CD4-positive, alpha-beta memory T cell (primary cell): ENCODE measurements at regions of chr19 and their contacts with region 1.

Region 1: GRCh38 chr19:1812469-1813196 is 557 bp upstream of the ATP8B3 start:
- DNase-seq: peak; percentile 85 to 90 (median 85)
- H3K4me3 ChIP-seq: peak overlapping the region; percentile 73
- H3K4me3 Mint-ChIP-seq: peak overlapping the region; percentile 86 to 99 (median 96)
- H3K27ac ChIP-seq: peak overlapping the region; percentile 42
- H3K27ac Mint-ChIP-seq: peak overlapping the region; percentile 87 to 98 (median 95)
- H3K4me1 ChIP-seq: peaks cover 14% of the 10 kb centered on the region
- H3K4me1 Mint-ChIP-seq: peaks cover 10 to 15% (median 11%) of the 10 kb centered on the region in 4 donors
- H3K27me3 ChIP-seq: no peaks in the 10 kb centered on the region
- H3K27me3 Mint-ChIP-seq: no peaks in the 10 kb centered on the region

Region 2: DNA sequence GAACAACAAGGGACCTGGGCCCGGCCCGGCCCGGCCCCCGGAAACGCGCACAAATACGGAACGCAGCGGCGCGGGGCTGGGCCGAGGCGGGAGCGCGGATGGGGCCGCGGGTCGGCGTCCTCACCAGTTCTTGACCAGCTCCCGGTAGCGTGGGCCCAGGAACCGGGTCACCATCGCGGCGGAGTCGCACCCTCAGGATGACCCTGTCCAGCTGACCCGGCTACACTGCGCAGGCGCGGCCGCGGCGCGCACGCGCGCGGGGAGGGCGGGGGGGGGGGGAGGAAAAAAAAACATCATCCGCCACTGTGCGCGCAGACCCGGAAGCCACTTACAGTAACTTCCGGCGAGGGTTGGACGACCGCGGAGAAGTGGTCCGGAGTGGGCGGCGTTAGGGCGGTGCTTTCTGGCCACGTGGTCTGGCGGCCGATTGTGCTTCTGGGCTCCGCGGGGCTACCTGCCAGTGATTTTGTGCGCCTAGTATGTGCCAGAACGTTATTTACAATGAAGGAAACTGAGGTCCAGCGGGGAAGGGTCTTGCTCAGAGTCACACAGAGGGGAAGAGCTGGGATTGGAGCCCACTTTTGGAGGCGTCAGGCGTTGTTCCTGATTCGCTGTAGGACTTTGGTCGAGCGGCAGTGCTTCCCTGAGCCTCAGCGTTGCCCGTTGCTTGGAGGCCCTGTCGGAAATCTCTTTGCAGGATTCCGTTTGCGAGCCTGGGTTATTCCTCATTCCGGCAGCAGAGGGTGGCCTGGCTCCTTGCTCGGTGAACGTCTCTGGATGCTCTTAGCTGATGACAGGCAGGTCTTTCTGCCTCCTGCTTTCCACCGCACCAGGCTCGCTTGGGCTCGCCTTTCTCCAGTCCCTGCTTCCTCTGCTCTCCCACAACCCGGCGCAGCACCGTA is 207.1 kb before region 1 on chr19 and contains the start of gene UQCR11:
- CTCF ChIA-PET with region 1: no interaction called
- POLR2A ChIA-PET with region 1: no interaction called
- intact Hi-C with region 1: loop called (anchors 2 kb)
- DNase-seq: peak; percentile 87 to 95 (median 91)
- H3K4me3 ChIP-seq: peak within 1 kb of the TSS; percentile 80 to 85
- H3K4me3 Mint-ChIP-seq: peak within 1 kb of the TSS; percentile 94 to 99 (median 96)
- H3K27ac ChIP-seq: peak within 1 kb of the TSS; percentile 94
- H3K27ac Mint-ChIP-seq: peak within 1 kb of the TSS; percentile 98 to 100 (median 99)
- H3K4me1 ChIP-seq: peaks cover 56% of the 10 kb centered on the region
- H3K4me1 Mint-ChIP-seq: peaks cover 20 to 70% (median 47%) of the 10 kb centered on the region in 4 donors
- H3K27me3 ChIP-seq: no peaks in the 10 kb centered on the region
- H3K27me3 Mint-ChIP-seq: no peaks in the 10 kb centered on the region
- total RNA-seq, gene UQCR11: 157 to 158 TPM

Region 3: GRCh38 chr19:1767464-1767933 is 45.1 kb before region 1 on chr19:
- CTCF ChIA-PET with region 1: no interaction called
- POLR2A ChIA-PET with region 1: interaction called, 3 read pairs
- intact Hi-C with region 1: loop called (anchors 5 kb)
- DNase-seq: peak; percentile 40 to 61 (median 47)
- H3K4me3 ChIP-seq: no peak overlapping the region
- H3K4me3 Mint-ChIP-seq: no peak overlapping the region
- H3K27ac ChIP-seq: no peak overlapping the region
- H3K27ac Mint-ChIP-seq: no peak overlapping the region
- H3K4me1 ChIP-seq: peaks cover 4% of the 10 kb centered on the region
- H3K4me1 Mint-ChIP-seq: peaks cover 0 to 2% (median 0%) of the 10 kb centered on the region in 4 donors
- H3K27me3 ChIP-seq: peaks cover 54% of the 10 kb centered on the region
- H3K27me3 Mint-ChIP-seq: peaks cover 41 to 51% of the 10 kb centered on the region in 2 donors

Region 4: DNA sequence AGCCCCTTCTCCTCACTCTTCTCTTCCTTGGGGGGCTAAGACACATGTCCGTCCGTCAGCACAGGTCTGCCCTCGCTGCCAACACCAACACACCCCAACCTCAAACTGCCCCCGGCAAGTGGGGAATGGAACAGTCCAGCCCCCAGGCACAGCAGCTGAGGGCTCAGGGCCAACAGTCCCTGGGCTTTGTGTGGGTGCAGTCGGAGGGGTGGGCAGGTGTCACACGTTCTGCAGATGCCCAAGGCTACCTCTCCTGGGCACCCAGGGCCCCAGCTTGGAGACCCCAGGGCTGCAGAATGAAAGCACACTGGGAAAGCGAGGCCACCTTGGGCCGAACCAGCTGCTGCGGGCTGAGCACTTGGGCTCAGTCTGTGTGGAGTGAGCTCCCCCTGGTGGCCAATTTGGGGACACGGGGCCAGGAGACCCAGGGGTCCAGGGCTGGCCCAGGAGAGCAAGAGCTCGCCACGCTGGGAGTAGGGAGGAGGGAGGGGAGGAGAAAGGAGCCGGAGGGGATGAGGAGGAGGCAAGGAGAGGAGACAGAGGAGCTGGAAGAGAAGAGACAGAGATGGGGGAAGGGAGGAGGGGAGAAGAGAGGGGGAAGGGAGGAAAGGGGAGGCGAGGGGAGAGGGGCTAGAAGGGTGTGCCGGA is 13.4 kb after region 1 on chr19:
- CTCF ChIA-PET with region 1: interaction called, 10 read pairs
- POLR2A ChIA-PET with region 1: interaction called, 5 read pairs
- intact Hi-C with region 1: no loop called
- DNase-seq: peak; percentile 70 to 75 (median 73)
- H3K4me3 ChIP-seq: no peak overlapping the region
- H3K4me3 Mint-ChIP-seq: peak overlapping the region in 2 of 8 donors; percentile 2 to 59
- H3K27ac ChIP-seq: no peak overlapping the region
- H3K27ac Mint-ChIP-seq: peak overlapping the region in 1 of 7 donors; percentile 47
- H3K4me1 ChIP-seq: peaks cover 6% of the 10 kb centered on the region
- H3K4me1 Mint-ChIP-seq: peaks cover 0 to 9% (median 2%) of the 10 kb centered on the region in 4 donors
- H3K27me3 ChIP-seq: no peaks in the 10 kb centered on the region
- H3K27me3 Mint-ChIP-seq: no peaks in the 10 kb centered on the region

Region 5: DNA sequence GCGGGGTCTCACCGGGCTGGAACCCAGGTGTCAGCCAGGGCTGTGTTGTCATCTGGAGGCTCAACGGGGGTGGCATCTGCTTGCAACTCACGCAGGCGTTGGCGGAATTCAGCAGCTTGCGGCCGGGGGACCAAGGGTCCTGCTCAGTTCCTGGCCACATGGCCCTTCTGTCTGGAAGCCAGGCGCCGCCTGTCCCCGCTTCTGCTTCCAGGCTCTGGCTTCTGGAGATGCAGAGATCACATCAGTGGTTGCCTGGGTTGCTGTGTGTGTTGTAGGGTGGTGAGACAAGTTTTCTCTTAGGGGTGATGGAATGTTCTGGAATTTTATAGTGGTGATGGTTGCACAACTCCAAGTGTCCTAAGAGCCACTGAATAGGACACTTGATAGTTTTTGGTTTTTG is 97.5 kb after region 1 on chr19:
- CTCF ChIA-PET with region 1: no interaction called
- POLR2A ChIA-PET with region 1: no interaction called
- intact Hi-C with region 1: no loop called
- DNase-seq: no peak
- H3K4me3 ChIP-seq: no peak overlapping the region
- H3K4me3 Mint-ChIP-seq: peak overlapping the region in 4 of 8 donors; percentile 10 to 67 (median 34)
- H3K27ac ChIP-seq: no peak overlapping the region
- H3K27ac Mint-ChIP-seq: peak overlapping the region in 6 of 7 donors; percentile 11 to 97 (median 85)
- H3K4me1 ChIP-seq: peaks cover 7% of the 10 kb centered on the region
- H3K4me1 Mint-ChIP-seq: peaks cover 6 to 32% (median 12%) of the 10 kb centered on the region in 4 donors
- H3K27me3 ChIP-seq: no peaks in the 10 kb centered on the region
- H3K27me3 Mint-ChIP-seq: no peaks in the 10 kb centered on the region